Mammary epithelial cell (primary cell): ENCODE measurements at regions of chr4 and their contacts with region 1.

Region 1: DNA sequence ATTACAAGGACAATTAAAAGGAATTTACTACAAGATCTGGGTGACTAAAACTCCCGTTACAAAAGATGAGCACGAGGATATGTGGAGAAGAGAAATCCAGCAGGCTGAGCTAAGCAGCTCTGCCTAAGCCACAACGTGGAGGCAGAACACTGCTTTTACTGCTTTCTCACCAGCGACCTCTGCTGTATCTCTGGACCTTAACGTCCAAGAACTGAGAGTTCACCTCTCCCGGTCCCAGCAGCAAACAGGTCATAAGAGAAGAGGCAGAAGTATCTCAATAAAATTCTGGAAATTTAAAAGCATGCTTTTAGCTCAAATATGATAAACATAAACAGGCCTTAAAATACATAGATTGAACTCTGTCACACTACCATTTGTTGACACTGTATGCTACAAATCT is 81.0 kb downstream of the ADGRA3 start:
- DNase-seq: peak; percentile 42
- H3K4me3 ChIP-seq: no peak overlapping the region
- H3K27ac ChIP-seq: no peak overlapping the region
- H3K4me1 ChIP-seq: no peaks in the 10 kb centered on the region
- H3K27me3 ChIP-seq: no peaks in the 10 kb centered on the region
- CTCF ChIP-seq: peak; percentile 11 to 52

Region 2: DNA sequence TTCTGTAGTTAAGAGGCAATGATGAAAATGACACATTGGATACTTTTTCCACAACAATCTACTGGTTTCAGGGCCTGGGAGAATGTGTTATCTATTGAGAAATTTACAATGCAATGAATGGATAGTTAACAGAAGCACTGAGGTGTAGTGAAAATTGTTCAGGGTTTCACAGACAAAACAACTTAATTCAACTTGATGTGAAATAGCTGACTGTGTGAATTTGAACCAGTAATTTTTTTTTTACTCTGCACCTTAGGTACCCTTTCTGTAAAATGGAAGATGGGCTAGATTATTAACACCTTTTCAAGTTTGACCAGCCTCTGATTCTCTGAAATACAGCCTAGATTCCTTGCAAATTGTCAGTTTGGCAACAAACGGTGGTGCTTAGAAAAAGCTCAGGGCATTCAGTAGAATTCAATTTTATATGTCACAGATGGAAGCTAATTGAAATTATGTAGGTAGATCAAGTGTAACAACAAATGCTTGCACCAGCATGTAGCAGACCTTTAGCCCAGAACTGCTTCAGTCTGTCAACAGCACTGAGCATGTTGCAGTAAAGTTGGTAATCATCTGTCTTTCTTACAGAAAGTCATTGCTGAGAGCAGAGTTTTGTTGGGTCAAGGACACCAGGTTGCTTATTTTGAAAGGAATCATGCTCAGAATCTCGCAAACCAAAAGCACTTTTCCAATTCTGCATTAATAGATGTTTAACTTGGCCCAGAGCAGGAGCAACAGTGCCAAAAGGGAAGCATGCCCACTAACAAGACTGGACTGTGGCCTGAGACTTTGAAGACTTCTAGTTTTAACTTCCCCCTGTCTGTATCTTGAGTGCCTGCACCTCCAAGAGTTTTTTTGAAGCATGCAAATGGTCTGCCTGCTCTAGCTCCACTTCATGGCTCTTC is 1208.0 kb before region 1 on chr4:
- CTCF ChIA-PET with region 1: no interaction called
- dilution Hi-C with region 1: no loop called
- in situ Hi-C with region 1: no loop called
- intact Hi-C with region 1: no loop called
- DNase-seq: no peak
- H3K4me3 ChIP-seq: no peak overlapping the region
- H3K27ac ChIP-seq: no peak overlapping the region
- H3K4me1 ChIP-seq: no peaks in the 10 kb centered on the region
- H3K27me3 ChIP-seq: no peaks in the 10 kb centered on the region
- CTCF ChIP-seq: no peak

Region 3: GRCh38 chr4:22522206-22522605 is 87.3 kb after region 1 on chr4:
- CTCF ChIA-PET with region 1: no interaction called
- dilution Hi-C with region 1: loop called (anchors 5 kb)
- in situ Hi-C with region 1: no loop called
- intact Hi-C with region 1: no loop called
- DNase-seq: no peak
- H3K4me3 ChIP-seq: no peak overlapping the region
- H3K27ac ChIP-seq: no peak overlapping the region
- H3K4me1 ChIP-seq: peaks cover 3% of the 10 kb centered on the region
- H3K27me3 ChIP-seq: no peaks in the 10 kb centered on the region
- CTCF ChIP-seq: no peak